Naive thymus-derived CD4-positive, alpha-beta T cell (primary cell): ENCODE measurements at regions of chr17 and their contacts with region 1.

Region 1: DNA sequence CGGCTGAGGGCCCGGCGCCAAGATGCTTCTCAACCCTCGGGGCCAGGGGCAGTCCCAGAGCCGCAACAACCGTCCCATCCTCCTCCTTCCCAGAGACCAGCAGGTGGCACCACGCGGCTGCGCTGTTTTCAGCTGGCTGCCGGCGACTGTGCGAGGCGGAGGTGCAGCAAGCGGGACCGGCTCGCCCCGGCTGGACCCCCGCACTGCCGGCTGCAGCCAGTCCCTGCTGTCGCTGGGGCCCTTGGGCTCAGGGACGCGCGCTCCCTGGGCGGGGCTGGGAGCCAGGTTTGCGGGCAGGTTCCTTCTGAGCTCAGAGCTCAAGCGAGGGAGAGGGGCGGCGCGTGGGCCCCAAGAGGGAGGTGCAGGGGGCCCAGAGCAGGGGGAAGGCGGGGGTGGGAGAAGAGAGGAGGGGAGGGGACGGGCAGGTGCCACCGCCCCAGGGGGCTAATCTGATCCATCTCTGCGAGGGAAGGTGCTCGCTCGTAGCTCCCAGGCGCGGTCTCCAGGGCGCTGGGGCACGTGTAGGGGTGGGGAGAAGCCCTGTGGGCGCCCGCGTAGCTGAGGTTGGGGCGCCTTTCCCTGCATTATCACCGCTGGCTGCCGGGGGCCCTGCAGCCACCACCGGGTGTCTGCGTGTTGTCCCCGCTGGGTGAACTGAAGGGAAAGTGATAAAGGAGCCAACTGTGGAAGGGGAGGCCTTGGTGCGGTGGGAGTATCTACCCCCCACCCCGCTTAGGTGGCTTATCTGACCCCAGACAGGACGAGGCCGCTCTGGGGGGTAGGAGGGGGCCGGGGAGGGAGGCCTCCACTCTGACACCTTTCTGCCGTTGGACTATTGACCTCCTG is 24.2 kb downstream of the STAT5A start:
- DNase-seq: peak; percentile 62 to 81 (median 74)
- ATAC-seq: peak; percentile 82
- H3K4me3 ChIP-seq: peak overlapping the region; percentile 24
- H3K4me3 Mint-ChIP-seq: peak overlapping the region; percentile 54 to 82 (median 72)
- H3K27ac ChIP-seq: peak overlapping the region; percentile 69
- H3K27ac Mint-ChIP-seq: peak overlapping the region; percentile 62 to 94 (median 85)
- H3K4me1 ChIP-seq: peaks cover 13 to 67% of the 10 kb centered on the region in 2 donors
- H3K4me1 Mint-ChIP-seq: peaks cover 49 to 94% (median 79%) of the 10 kb centered on the region in 7 donors
- H3K27me3 ChIP-seq: no peaks in the 10 kb centered on the region
- H3K27me3 Mint-ChIP-seq: no peaks in the 10 kb centered on the region

Region 2: GRCh38 chr17:42221937-42222745 is 90.4 kb before region 1 on chr17:
- CTCF ChIA-PET with region 1: interaction called, 54 read pairs
- POLR2A ChIA-PET with region 1: interaction called, 9 read pairs
- intact Hi-C with region 1: loop called (anchors 2 kb)
- DNase-seq: peak; percentile 39 to 80 (median 71)
- ATAC-seq: peak; percentile 95
- H3K4me3 ChIP-seq: no peak overlapping the region
- H3K4me3 Mint-ChIP-seq: no peak overlapping the region
- H3K27ac ChIP-seq: no peak overlapping the region
- H3K27ac Mint-ChIP-seq: peak overlapping the region in 8 of 9 donors; percentile 53 to 88 (median 70)
- H3K4me1 ChIP-seq: peaks cover 0 to 5% of the 10 kb centered on the region in 2 donors
- H3K4me1 Mint-ChIP-seq: peaks cover 0 to 9% (median 6%) of the 10 kb centered on the region in 7 donors
- H3K27me3 ChIP-seq: no peaks in the 10 kb centered on the region
- H3K27me3 Mint-ChIP-seq: no peaks in the 10 kb centered on the region

Region 3: GRCh38 chr17:42276359-42276608 is 36.2 kb before region 1 on chr17 and contains the start of gene STAT5B:
- CTCF ChIA-PET with region 1: interaction called, 4 read pairs
- POLR2A ChIA-PET with region 1: interaction called, 16 read pairs
- intact Hi-C with region 1: no loop called
- DNase-seq: peak in 8 of 9 donors; percentile 52 to 82 (median 73)
- ATAC-seq: peak; percentile 84
- H3K4me3 ChIP-seq: peak within 1 kb of the TSS; percentile 93
- H3K4me3 Mint-ChIP-seq: peak within 1 kb of the TSS; percentile 95 to 100 (median 98)
- H3K27ac ChIP-seq: peak within 1 kb of the TSS; percentile 90
- H3K27ac Mint-ChIP-seq: peak within 1 kb of the TSS; percentile 91 to 99 (median 97)
- H3K4me1 ChIP-seq: peaks cover 30 to 32% of the 10 kb centered on the region in 2 donors
- H3K4me1 Mint-ChIP-seq: peaks cover 34 to 56% (median 50%) of the 10 kb centered on the region in 7 donors
- H3K27me3 ChIP-seq: no peaks in the 10 kb centered on the region
- H3K27me3 Mint-ChIP-seq: no peaks in the 10 kb centered on the region
- total RNA-seq, gene STAT5B: 143 to 192 (median 183) TPM

Region 4: DNA sequence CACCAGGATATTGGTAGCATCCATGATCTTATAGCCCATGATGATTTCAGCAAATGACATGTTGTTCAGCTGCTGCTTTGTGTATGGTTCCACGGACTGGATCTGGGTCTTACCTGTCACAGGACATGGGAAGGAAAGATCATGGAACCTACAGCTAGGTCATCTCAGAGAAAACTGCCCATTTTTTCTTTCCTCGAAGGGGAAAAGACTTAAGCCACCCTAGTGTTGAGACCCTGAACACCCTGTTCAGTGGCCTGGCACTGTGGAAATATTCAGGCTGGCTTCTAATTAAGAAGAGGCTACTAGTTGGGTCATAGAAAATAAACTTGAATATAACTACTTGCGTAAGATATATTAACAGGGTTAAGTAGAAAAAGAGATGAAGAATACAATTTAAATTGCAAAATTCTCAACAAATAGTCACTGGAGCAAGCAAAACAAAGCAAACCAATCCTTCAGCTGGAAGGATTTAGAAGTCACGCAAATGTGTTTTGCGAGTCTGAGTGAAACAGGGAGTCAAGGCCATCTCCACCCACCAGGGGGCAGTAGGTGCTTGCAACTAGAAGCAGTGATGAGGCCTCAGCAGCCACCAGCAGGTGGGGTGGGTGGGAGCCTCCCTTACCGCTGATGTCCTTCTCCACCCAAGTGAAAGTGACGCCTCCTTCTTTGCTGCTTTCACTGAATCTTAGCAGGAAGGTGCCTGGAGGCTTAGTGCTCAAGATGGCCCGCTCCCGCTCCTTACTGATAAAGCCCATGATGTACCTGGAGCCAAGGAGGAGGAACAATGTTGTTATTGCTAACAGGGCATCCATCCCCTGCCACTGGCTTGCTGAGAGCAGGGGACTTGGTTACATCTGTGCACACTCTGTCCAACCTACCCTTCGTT is 10.1 kb after region 1 on chr17:
- CTCF ChIA-PET with region 1: interaction called, 46 read pairs
- POLR2A ChIA-PET with region 1: interaction called, 34 read pairs
- intact Hi-C with region 1: loop called (anchors 1 kb)
- DNase-seq: peak; percentile 80 to 95 (median 93)
- ATAC-seq: peak; percentile 100
- H3K4me3 ChIP-seq: no peak overlapping the region
- H3K4me3 Mint-ChIP-seq: peak overlapping the region in 3 of 10 donors; percentile 19 to 45 (median 27)
- H3K27ac ChIP-seq: peak overlapping the region; percentile 40
- H3K27ac Mint-ChIP-seq: peak overlapping the region; percentile 42 to 91 (median 80)
- H3K4me1 ChIP-seq: peaks cover 3 to 23% of the 10 kb centered on the region in 2 donors
- H3K4me1 Mint-ChIP-seq: peaks cover 19 to 55% (median 43%) of the 10 kb centered on the region in 7 donors
- H3K27me3 ChIP-seq: no peaks in the 10 kb centered on the region
- H3K27me3 Mint-ChIP-seq: no peaks in the 10 kb centered on the region

Region 5: DNA sequence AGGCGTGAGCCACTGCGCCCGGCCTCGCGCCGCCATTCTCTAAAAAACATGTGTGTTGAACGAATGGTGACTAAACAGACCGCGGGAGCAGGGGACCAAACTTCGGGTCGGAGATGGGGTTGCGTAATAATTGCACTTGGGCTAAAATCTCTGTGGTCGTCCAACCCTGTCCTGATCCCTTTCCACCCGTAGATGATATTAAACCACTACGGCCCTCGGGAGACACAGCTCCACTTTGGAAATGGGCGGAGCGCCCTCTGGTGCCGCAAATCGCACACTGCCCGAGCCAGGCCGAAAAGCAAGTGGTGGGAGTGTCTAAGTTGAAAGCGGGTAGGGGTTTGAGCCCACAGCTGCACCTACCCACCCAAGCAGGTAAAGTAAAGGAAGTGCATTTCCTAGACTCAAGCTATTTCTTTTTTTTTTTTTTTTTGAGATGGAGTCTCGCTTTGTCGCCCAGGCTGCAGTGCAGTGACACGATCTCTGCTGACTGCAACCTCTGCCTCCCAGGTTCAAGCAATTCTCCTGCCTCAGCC is 93.5 kb after region 1 on chr17:
- CTCF ChIA-PET with region 1: interaction called, 264 read pairs
- POLR2A ChIA-PET with region 1: interaction called, 8 read pairs
- intact Hi-C with region 1: loop called (anchors 1 to 2 kb)
- DNase-seq: peak; percentile 72 to 86 (median 80)
- ATAC-seq: peak; percentile 91
- H3K4me3 ChIP-seq: no peak overlapping the region
- H3K4me3 Mint-ChIP-seq: peak overlapping the region in 4 of 10 donors; percentile 9 to 41 (median 29)
- H3K27ac ChIP-seq: no peak overlapping the region
- H3K27ac Mint-ChIP-seq: peak overlapping the region in 6 of 9 donors; percentile 51 to 71 (median 62)
- H3K4me1 ChIP-seq: peaks cover 4 to 8% of the 10 kb centered on the region in 2 donors
- H3K4me1 Mint-ChIP-seq: peaks cover 6 to 28% (median 17%) of the 10 kb centered on the region in 7 donors
- H3K27me3 ChIP-seq: no peaks in the 10 kb centered on the region
- H3K27me3 Mint-ChIP-seq: peaks cover 0 to 3% (median 0%) of the 10 kb centered on the region in 5 donors

Region 6: GRCh38 chr17:42677008-42677857 is 364.7 kb after region 1 on chr17:
- CTCF ChIA-PET with region 1: no interaction called
- POLR2A ChIA-PET with region 1: no interaction called
- intact Hi-C with region 1: loop called in 1 of 2 experiments (anchors 10 kb)
- DNase-seq: peak; percentile 80 to 98 (median 92)
- ATAC-seq: peak; percentile 90
- H3K4me3 ChIP-seq: peak overlapping the region; percentile 73
- H3K4me3 Mint-ChIP-seq: peak overlapping the region; percentile 79 to 94 (median 90)
- H3K27ac ChIP-seq: peak overlapping the region; percentile 64
- H3K27ac Mint-ChIP-seq: peak overlapping the region in 8 of 9 donors; percentile 7 to 91 (median 82)
- H3K4me1 ChIP-seq: peaks cover 47 to 57% of the 10 kb centered on the region in 2 donors
- H3K4me1 Mint-ChIP-seq: peaks cover 21 to 60% (median 50%) of the 10 kb centered on the region in 7 donors
- H3K27me3 ChIP-seq: peaks cover 5 to 21% of the 10 kb centered on the region in 2 donors
- H3K27me3 Mint-ChIP-seq: peaks cover 26 to 49% (median 36%) of the 10 kb centered on the region in 5 donors